ENCODE measurements at regions of chr9 and their contacts with region 1.

Region 1: GRCh38 chr9:75053869-75054268 is 25.8 kb upstream of the CARNMT1 start:
- DNase-seq: peak; percentile 19
- ATAC-seq: peak; percentile 100
- H3K4me3 ChIP-seq: no peak overlapping the region
- H3K4me3 Mint-ChIP-seq: peak overlapping the region; percentile 72
- H3K27ac ChIP-seq: no peak overlapping the region
- H3K27ac Mint-ChIP-seq: peak overlapping the region; percentile 85
- H3K4me1 ChIP-seq: peaks cover 9 to 16% of the 10 kb centered on the region in 2 donors
- H3K4me1 Mint-ChIP-seq: peaks cover 23% of the 10 kb centered on the region
- H3K27me3 ChIP-seq: no peaks in the 10 kb centered on the region
- H3K27me3 Mint-ChIP-seq: no peaks in the 10 kb centered on the region
- CTCF ChIP-seq: no peak

Region 2: GRCh38 chr9:74940600-74940999 is 113.3 kb before region 1 on chr9:
- CTCF ChIA-PET with region 1: no interaction called
- POLR2A ChIA-PET with region 1: no interaction called
- intact Hi-C with region 1: no loop called
- DNase-seq: no peak
- ATAC-seq: no peak
- H3K4me3 ChIP-seq: no peak overlapping the region
- H3K4me3 Mint-ChIP-seq: no peak overlapping the region
- H3K27ac ChIP-seq: no peak overlapping the region
- H3K27ac Mint-ChIP-seq: no peak overlapping the region
- H3K4me1 ChIP-seq: no peaks in the 10 kb centered on the region
- H3K4me1 Mint-ChIP-seq: peaks cover 3% of the 10 kb centered on the region
- H3K27me3 ChIP-seq: no peaks in the 10 kb centered on the region
- H3K27me3 Mint-ChIP-seq: no peaks in the 10 kb centered on the region
- CTCF ChIP-seq: no peak

Region 3: GRCh38 chr9:74985041-74985440 is 68.8 kb before region 1 on chr9:
- CTCF ChIA-PET with region 1: no interaction called
- POLR2A ChIA-PET with region 1: no interaction called
- intact Hi-C with region 1: no loop called
- DNase-seq: no peak
- ATAC-seq: no peak
- H3K4me3 ChIP-seq: no peak overlapping the region
- H3K4me3 Mint-ChIP-seq: no peak overlapping the region
- H3K27ac ChIP-seq: no peak overlapping the region
- H3K27ac Mint-ChIP-seq: no peak overlapping the region
- H3K4me1 ChIP-seq: no peaks in the 10 kb centered on the region
- H3K4me1 Mint-ChIP-seq: no peaks in the 10 kb centered on the region
- H3K27me3 ChIP-seq: no peaks in the 10 kb centered on the region
- H3K27me3 Mint-ChIP-seq: no peaks in the 10 kb centered on the region
- CTCF ChIP-seq: no peak

Region 4: GRCh38 chr9:75088260-75088905 is 34.5 kb after region 1 on chr9 and contains the start of gene OSTF1:
- CTCF ChIA-PET with region 1: interaction called, 3 read pairs
- POLR2A ChIA-PET with region 1: interaction called, 13 read pairs
- intact Hi-C with region 1: loop called (anchors 5 kb)
- DNase-seq: peak; percentile 96
- ATAC-seq: peak; percentile 86
- H3K4me3 ChIP-seq: peak within 1 kb of the TSS; percentile 88 to 99 (median 94)
- H3K4me3 Mint-ChIP-seq: peak within 1 kb of the TSS; percentile 95
- H3K27ac ChIP-seq: peak within 1 kb of the TSS; percentile 79 to 85
- H3K27ac Mint-ChIP-seq: peak within 1 kb of the TSS; percentile 94
- H3K4me1 ChIP-seq: peaks cover 57 to 58% of the 10 kb centered on the region in 2 donors
- H3K4me1 Mint-ChIP-seq: peaks cover 50% of the 10 kb centered on the region
- H3K27me3 ChIP-seq: no peaks in the 10 kb centered on the region
- H3K27me3 Mint-ChIP-seq: no peaks in the 10 kb centered on the region
- CTCF ChIP-seq: no peak
- total RNA-seq, gene OSTF1: 57.8 and 62.0 TPM in 2 replicates

Measured in B cell (primary cell).